CD4-positive, alpha-beta memory T cell (primary cell): ENCODE measurements at regions of chr2 and their contacts with region 1.

Region 1: GRCh38 chr2:157443795-157444640 is at the start of gene CYTIP:
- DNase-seq: peak; percentile 71 to 78 (median 76)
- H3K4me3 ChIP-seq: peak within 1 kb of the TSS; percentile 81 to 85
- H3K4me3 Mint-ChIP-seq: peak within 1 kb of the TSS; percentile 90 to 100 (median 98)
- H3K27ac ChIP-seq: peak within 1 kb of the TSS; percentile 85
- H3K27ac Mint-ChIP-seq: peak within 1 kb of the TSS; percentile 94 to 100 (median 95)
- H3K4me1 ChIP-seq: peaks cover 47% of the 10 kb centered on the region
- H3K4me1 Mint-ChIP-seq: peaks cover 33 to 78% (median 38%) of the 10 kb centered on the region in 4 donors
- H3K27me3 ChIP-seq: no peaks in the 10 kb centered on the region
- H3K27me3 Mint-ChIP-seq: no peaks in the 10 kb centered on the region
- total RNA-seq, gene CYTIP: 231 to 248 TPM

Region 2: GRCh38 chr2:157336137-157337010 is 107.6 kb before region 1 on chr2:
- CTCF ChIA-PET with region 1: interaction called, 340 read pairs
- POLR2A ChIA-PET with region 1: interaction called, 375 read pairs
- intact Hi-C with region 1: no loop called
- DNase-seq: peak in 4 of 5 donors; percentile 40 to 53 (median 48)
- H3K4me3 ChIP-seq: no peak overlapping the region
- H3K4me3 Mint-ChIP-seq: peak overlapping the region; percentile 61 to 83 (median 75)
- H3K27ac ChIP-seq: no peak overlapping the region
- H3K27ac Mint-ChIP-seq: peak overlapping the region; percentile 19 to 87 (median 45)
- H3K4me1 ChIP-seq: peaks cover 43% of the 10 kb centered on the region
- H3K4me1 Mint-ChIP-seq: peaks cover 45 to 60% (median 51%) of the 10 kb centered on the region in 4 donors
- H3K27me3 ChIP-seq: no peaks in the 10 kb centered on the region
- H3K27me3 Mint-ChIP-seq: no peaks in the 10 kb centered on the region

Region 3: DNA sequence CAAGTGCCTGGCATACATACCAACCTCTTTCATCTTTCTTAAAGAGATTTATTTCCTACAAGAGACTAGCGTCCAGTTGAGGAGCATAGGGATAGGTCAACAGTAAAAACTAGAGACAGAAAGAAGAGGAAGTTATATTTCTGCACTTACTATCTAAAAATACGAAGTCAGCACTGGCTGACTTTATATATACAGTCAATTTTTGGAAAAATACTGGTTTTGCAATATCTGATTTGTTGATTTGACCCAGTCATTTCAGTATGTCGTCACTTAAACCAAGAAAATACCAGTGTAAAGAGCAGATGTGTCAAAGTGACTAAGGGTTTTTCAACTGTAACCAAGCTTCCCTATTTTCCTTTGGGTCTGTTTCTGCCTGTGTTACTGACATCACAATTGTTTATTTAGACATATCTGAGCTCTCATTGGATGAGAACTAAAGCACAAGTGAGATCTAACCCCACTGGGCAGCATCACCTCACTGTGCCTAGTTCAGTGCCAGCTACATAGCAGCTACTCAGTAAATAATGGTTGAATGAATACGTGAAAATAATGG is 23.2 kb before region 1 on chr2:
- CTCF ChIA-PET with region 1: interaction called, 38 read pairs
- POLR2A ChIA-PET with region 1: interaction called, 1,017 read pairs
- intact Hi-C with region 1: loop called (anchors 1 kb)
- DNase-seq: peak in 1 of 5 donors; percentile 29
- H3K4me3 ChIP-seq: no peak overlapping the region
- H3K4me3 Mint-ChIP-seq: peak overlapping the region in 7 of 8 donors; percentile 31 to 82 (median 52)
- H3K27ac ChIP-seq: peak overlapping the region; percentile 36
- H3K27ac Mint-ChIP-seq: peak overlapping the region; percentile 83 to 97 (median 92)
- H3K4me1 ChIP-seq: peaks cover 87% of the 10 kb centered on the region
- H3K4me1 Mint-ChIP-seq: peaks cover 54 to 76% (median 67%) of the 10 kb centered on the region in 4 donors
- H3K27me3 ChIP-seq: no peaks in the 10 kb centered on the region
- H3K27me3 Mint-ChIP-seq: no peaks in the 10 kb centered on the region

Region 4: DNA sequence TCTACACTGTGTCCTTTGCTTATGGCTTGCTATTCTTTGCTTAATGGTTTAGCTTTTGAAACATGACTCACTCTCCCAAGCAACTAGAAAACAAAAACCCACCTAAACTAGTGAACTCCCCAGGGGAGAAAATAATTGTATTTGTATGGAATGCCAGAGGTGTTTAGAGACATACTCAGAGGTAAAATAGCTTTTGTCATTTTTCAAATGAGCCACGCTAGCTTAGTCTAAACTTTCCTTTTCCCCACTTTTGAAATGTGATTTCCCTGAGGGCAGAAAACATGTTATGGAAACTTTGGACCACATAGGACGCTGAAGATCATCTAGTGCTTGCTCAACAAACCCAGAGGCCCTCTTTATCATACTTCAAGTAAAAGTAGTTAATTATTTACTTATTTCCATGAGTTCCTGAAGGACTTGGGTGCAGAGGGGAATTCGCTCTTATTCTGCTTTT is 16.4 kb after region 1 on chr2:
- CTCF ChIA-PET with region 1: interaction called, 14 read pairs
- POLR2A ChIA-PET with region 1: interaction called, 131 read pairs
- intact Hi-C with region 1: no loop called
- DNase-seq: no peak
- H3K4me3 ChIP-seq: no peak overlapping the region
- H3K4me3 Mint-ChIP-seq: peak overlapping the region in 7 of 8 donors; percentile 5 to 70 (median 58)
- H3K27ac ChIP-seq: no peak overlapping the region
- H3K27ac Mint-ChIP-seq: peak overlapping the region in 6 of 7 donors; percentile 42 to 93 (median 78)
- H3K4me1 ChIP-seq: peaks cover 55% of the 10 kb centered on the region
- H3K4me1 Mint-ChIP-seq: peaks cover 38 to 71% (median 50%) of the 10 kb centered on the region in 4 donors
- H3K27me3 ChIP-seq: no peaks in the 10 kb centered on the region
- H3K27me3 Mint-ChIP-seq: no peaks in the 10 kb centered on the region

Region 5: DNA sequence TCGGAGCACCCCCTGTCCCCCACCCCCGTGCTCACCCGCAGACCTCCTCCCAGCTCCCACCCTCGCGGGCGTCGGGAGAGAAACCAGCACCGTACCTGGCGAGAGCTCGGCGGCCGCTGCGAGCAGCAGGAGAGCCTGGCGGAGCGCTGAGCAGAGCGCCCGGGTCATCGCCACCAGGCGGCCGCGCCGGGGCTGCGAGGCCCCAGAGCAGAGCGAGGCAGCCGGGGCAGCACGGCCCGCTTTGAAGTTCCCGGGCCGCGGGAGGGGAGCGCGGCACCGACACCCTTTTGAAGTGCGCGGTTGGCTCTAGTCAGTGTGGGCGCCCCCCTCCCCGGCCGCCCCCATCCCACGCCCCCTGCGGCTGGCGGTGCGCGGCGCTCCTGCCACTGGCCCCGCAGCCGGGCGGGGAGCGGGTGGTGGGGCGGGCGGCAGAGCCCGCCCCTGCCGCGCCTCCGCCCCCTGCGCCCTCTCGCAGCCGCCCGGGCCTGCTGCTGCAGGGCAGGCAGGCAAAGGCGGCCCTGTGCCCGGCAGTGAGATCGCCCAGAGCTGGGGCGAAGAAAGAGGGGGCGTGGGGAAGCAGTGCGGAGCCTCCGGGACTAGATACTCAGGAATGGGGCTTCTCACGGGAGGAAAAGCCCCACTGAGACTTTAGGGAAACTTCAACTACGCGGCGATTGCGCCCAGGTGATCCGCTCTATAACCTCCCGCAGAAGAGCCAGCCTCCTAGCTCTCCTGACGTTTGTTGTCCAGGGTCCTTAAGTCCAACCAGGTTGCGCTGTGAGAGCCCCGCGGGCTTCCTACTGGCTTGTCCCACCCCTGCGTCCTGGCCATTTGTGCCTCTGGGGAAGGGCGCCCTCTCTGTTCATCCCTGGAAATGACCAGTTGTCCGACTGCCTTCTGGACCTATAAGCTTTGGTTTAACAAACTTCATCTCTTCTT is 184.7 kb after region 1 on chr2 and contains the start of gene ACVR1C:
- CTCF ChIA-PET with region 1: interaction called, 3 read pairs
- POLR2A ChIA-PET with region 1: interaction called, 6 read pairs
- intact Hi-C with region 1: loop called (anchors 5 kb)
- DNase-seq: peak; percentile 70 to 81 (median 75)
- H3K4me3 ChIP-seq: peak within 1 kb of the TSS; percentile 45 to 68
- H3K4me3 Mint-ChIP-seq: peak within 1 kb of the TSS; percentile 92 to 98 (median 95)
- H3K27ac ChIP-seq: peak within 1 kb of the TSS; percentile 58
- H3K27ac Mint-ChIP-seq: peak within 1 kb of the TSS; percentile 85 to 94 (median 89)
- H3K4me1 ChIP-seq: peaks cover 39% of the 10 kb centered on the region
- H3K4me1 Mint-ChIP-seq: peaks cover 22 to 48% (median 33%) of the 10 kb centered on the region in 4 donors
- H3K27me3 ChIP-seq: no peaks in the 10 kb centered on the region
- H3K27me3 Mint-ChIP-seq: peaks cover 0 to 2% of the 10 kb centered on the region in 2 donors
- total RNA-seq, gene ACVR1C: 6.3 to 6.9 TPM

Region 6: DNA sequence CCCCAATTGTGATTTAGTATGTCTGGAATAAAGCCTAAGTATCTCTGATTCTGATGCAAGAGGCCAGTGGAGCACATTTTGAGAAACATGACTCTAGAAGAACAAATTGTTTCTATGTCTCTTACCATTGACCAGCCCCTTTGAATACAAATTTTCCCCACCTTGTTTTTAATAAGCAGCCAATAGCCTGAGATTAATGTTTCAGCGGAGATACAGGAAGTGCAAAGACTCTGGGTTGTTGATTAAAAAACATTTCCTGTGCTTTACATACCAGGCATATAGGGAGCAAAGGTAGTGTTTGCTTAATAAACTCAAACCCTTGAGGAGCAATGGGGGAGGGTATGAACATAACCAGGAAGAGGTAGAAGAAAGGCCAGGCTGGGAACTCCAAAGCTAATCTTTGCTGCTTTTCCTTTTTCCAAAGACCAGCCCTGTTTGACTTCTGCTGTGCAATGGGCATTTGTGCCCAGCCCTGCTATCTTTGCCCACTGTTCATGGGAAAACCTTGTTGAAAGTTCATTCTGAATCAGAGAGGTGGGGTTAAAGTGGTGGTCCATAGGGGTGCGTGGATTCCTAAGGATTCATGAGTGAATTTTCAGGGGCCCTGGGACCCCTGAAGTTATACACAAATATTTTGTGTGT is 686.9 kb after region 1 on chr2:
- CTCF ChIA-PET with region 1: no interaction called
- POLR2A ChIA-PET with region 1: no interaction called
- intact Hi-C with region 1: no loop called
- DNase-seq: no peak
- H3K4me3 ChIP-seq: no peak overlapping the region
- H3K4me3 Mint-ChIP-seq: no peak overlapping the region
- H3K27ac ChIP-seq: no peak overlapping the region
- H3K27ac Mint-ChIP-seq: no peak overlapping the region
- H3K4me1 ChIP-seq: no peaks in the 10 kb centered on the region
- H3K4me1 Mint-ChIP-seq: no peaks in the 10 kb centered on the region
- H3K27me3 ChIP-seq: no peaks in the 10 kb centered on the region
- H3K27me3 Mint-ChIP-seq: peaks cover 0 to 5% of the 10 kb centered on the region in 2 donors